A673 (cell line): ENCODE measurements at regions of chr14 and their contacts with region 1.

Region 1: DNA sequence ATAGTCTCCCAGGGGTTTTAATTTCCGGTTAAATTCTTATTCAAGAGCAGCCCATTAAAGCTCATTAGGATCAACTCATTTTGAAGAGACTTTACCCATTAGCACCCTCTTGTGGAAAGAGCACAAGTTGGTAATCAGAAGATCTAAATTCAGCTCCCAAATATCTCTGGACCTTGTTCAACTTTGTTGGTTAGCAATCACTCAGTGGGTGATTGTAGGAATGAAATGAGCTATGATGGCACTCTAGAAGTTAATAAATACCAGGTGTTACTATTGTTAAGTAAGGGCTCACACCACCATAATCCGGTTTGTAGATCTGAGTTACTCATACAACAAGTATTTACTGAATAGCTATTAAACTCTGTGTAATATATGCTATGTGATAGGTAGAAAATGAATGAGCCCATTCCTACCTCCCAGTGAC is 42.9 kb downstream of the TRIP11 start:
- DNase-seq: peak; percentile 92
- H3K4me3 ChIP-seq: no peak overlapping the region
- H3K27ac ChIP-seq: no peak overlapping the region
- H3K4me1 ChIP-seq: peaks cover 22% of the 10 kb centered on the region
- H3K27me3 ChIP-seq: no peaks in the 10 kb centered on the region
- CTCF ChIP-seq: peak; percentile 76

Region 2: GRCh38 chr14:90023176-90023896 is 1973.6 kb before region 1 on chr14:
- CTCF ChIA-PET with region 1: no interaction called
- POLR2A ChIA-PET with region 1: no interaction called
- intact Hi-C with region 1: no loop called
- DNase-seq: no peak
- H3K4me3 ChIP-seq: no peak overlapping the region
- H3K27ac ChIP-seq: no peak overlapping the region
- H3K4me1 ChIP-seq: no peaks in the 10 kb centered on the region
- H3K27me3 ChIP-seq: no peaks in the 10 kb centered on the region
- CTCF ChIP-seq: no peak

Region 3: DNA sequence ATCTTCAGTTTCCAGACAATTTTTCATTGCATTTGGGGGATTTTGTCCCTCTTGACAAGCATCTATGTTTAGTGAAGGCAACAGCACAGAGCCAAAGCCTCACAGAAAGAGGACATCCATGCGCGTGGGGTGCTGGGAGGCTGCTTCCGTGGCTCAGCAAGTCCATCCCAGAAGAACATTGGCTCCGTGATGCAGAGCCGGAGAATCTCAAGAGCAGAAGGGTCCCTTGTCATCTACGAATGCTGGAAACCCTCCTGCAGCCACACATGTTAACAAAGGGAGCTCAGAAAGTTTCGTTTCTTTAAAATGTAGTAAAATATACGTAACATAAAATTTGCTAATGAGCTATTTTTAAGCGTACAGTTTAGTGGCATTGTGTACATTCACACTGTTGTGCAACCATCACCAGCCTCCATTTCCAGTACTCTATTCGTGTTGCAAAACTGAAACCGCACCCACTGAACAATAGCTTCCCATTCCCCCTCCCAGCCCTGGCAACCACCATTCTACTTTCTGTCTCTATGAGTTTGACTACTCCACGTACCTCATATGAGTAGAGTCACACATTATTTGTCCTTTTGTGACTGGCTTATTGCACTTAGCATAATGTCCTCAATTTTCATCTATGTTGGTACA is 1366.7 kb before region 1 on chr14:
- CTCF ChIA-PET with region 1: no interaction called
- POLR2A ChIA-PET with region 1: interaction called, 20 read pairs
- intact Hi-C with region 1: no loop called
- DNase-seq: no peak
- H3K4me3 ChIP-seq: no peak overlapping the region
- H3K27ac ChIP-seq: no peak overlapping the region
- H3K4me1 ChIP-seq: no peaks in the 10 kb centered on the region
- H3K27me3 ChIP-seq: no peaks in the 10 kb centered on the region
- CTCF ChIP-seq: no peak

Region 4: DNA sequence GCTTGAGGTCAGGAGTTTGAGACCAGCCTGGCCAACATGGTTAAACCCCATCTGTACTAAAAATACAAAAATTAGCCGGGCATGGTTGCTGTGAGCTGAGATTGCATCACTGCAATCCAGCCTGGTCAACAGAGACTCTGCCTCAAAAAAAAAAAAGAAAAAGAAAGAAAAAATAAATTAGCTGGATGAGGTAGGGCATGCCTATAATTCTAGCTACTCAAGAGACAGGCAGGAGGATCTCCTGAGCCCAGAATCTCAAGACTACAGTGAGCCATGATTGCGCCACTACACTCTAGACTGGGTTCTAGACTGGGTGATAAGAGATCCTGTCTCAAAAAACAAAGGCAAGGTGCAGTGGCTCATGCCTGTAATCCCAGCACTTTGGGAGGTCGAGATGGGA is 503.8 kb before region 1 on chr14:
- CTCF ChIA-PET with region 1: no interaction called
- POLR2A ChIA-PET with region 1: no interaction called
- intact Hi-C with region 1: loop called (anchors 10 kb)
- DNase-seq: no peak
- H3K4me3 ChIP-seq: no peak overlapping the region
- H3K27ac ChIP-seq: no peak overlapping the region
- H3K4me1 ChIP-seq: peaks cover 12% of the 10 kb centered on the region
- H3K27me3 ChIP-seq: no peaks in the 10 kb centered on the region
- CTCF ChIP-seq: no peak

Region 5: GRCh38 chr14:91649930-91650329 is 347.0 kb before region 1 on chr14:
- CTCF ChIA-PET with region 1: no interaction called
- POLR2A ChIA-PET with region 1: no interaction called
- intact Hi-C with region 1: loop called (anchors 10 kb)
- DNase-seq: peak; percentile 19
- H3K4me3 ChIP-seq: no peak overlapping the region
- H3K27ac ChIP-seq: no peak overlapping the region
- H3K4me1 ChIP-seq: no peaks in the 10 kb centered on the region
- H3K27me3 ChIP-seq: no peaks in the 10 kb centered on the region
- CTCF ChIP-seq: peak; percentile 51; the same call in 1 of the 2 replicates

Region 6: GRCh38 chr14:91708795-91709194 is 288.2 kb before region 1 on chr14:
- CTCF ChIA-PET with region 1: no interaction called
- POLR2A ChIA-PET with region 1: no interaction called
- intact Hi-C with region 1: no loop called
- DNase-seq: no peak
- H3K4me3 ChIP-seq: no peak overlapping the region
- H3K27ac ChIP-seq: no peak overlapping the region
- H3K4me1 ChIP-seq: no peaks in the 10 kb centered on the region
- H3K27me3 ChIP-seq: no peaks in the 10 kb centered on the region
- CTCF ChIP-seq: no peak

Region 7: DNA sequence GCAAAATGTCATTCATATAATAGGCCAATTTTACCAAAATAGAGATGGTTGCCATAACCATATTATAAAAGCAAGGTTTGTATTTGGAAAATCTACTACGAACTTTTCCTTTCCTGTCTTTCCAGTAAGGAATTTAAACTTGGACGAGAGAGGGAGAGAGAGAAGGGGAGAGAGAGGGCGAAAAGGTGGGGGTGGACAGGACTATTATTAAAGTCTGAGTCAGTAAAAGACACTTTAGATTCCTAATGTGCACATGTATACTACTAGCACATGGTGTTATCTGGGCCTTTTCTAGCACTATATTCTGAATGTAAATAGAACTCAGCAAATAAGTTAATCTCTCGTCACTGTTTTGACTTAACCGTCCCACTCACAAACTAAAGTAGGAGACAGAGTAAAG is 19.1 kb before region 1 on chr14:
- CTCF ChIA-PET with region 1: no interaction called
- POLR2A ChIA-PET with region 1: no interaction called
- intact Hi-C with region 1: no loop called
- DNase-seq: no peak
- H3K4me3 ChIP-seq: no peak overlapping the region
- H3K27ac ChIP-seq: no peak overlapping the region
- H3K4me1 ChIP-seq: no peaks in the 10 kb centered on the region
- H3K27me3 ChIP-seq: no peaks in the 10 kb centered on the region
- CTCF ChIP-seq: no peak